HepG2 (cell line): ENCODE measurements at regions of chr2 and their contacts with region 1.

Region 1: GRCh38 chr2:237315170-237315828 is 98.7 kb downstream of the COL6A3 start:
- DNase-seq: peak; percentile 71
- ATAC-seq: peak; percentile 93
- H3K4me3 ChIP-seq: 0 out of 6 replicates have a peak overlapping the region, but pooled peaks of 1 of the 3 experiments have one; percentile 1
- H3K27ac ChIP-seq: no peak overlapping the region
- H3K4me1 ChIP-seq: peaks cover 21% of the 10 kb centered on the region
- H3K27me3 ChIP-seq: peaks cover 1 to 59% of the 10 kb centered on the region in 2 experiments; a peak in 4 of 5 replicates
- CTCF ChIP-seq: no peak
- EP300 ChIP-seq: 0 out of 4 replicates have a peak, but pooled peaks of 1 of the 2 experiments have one; percentile 11
- POLR2A ChIP-seq: no peak
- RAD21 ChIP-seq: no peak

Region 2: DNA sequence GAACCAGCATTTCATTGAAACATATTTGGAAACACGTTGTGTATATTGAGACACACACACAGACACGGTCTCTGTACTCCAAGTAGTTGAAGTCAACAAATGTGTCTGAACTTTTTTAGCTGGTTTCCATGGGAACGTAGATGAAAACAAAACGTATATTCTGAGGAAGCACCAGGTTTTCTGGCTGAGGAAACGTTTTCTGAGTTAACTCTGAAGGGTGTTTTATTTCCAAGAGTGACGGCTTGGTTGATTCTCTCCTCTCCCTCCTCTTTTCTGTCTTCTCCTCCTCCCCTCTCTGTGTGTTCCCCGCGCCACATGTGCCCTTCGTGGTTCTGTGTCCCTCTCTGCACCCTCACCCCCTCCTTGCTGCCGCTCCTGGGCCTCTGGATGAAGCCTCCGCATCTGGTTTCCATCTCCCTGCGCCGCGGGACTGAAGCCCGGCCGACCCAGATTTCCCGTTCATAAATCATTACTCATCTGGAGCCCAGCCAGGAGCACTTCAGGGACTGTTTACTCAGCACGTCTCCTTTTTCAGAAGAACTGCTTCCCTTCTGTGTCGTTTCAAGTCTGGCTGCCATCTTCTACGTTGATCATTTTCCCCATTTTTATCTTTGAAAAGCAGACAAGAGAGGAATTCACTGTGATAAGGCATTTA is 24.0 kb before region 1 on chr2:
- CTCF ChIA-PET with region 1: no interaction called
- POLR2A ChIA-PET with region 1: no interaction called
- in situ Hi-C with region 1: no loop called
- intact Hi-C with region 1: loop called (anchors 1 kb)
- DNase-seq: peak; percentile 63
- ATAC-seq: peak; percentile 80
- H3K4me3 ChIP-seq: no peak overlapping the region; a peak in 1 of 6 replicates
- H3K27ac ChIP-seq: no peak overlapping the region
- H3K4me1 ChIP-seq: peaks cover 11% of the 10 kb centered on the region
- H3K27me3 ChIP-seq: peaks cover 0 to 23% of the 10 kb centered on the region in 2 experiments; a peak in 4 of 5 replicates
- CTCF ChIP-seq: no peak
- EP300 ChIP-seq: no peak
- POLR2A ChIP-seq: no peak
- RAD21 ChIP-seq: no peak

Region 3: GRCh38 chr2:237383991-237384671 is 68.8 kb after region 1 on chr2:
- CTCF ChIA-PET with region 1: no interaction called
- POLR2A ChIA-PET with region 1: no interaction called
- in situ Hi-C with region 1: no loop called
- intact Hi-C with region 1: no loop called
- DNase-seq: no peak
- ATAC-seq: no peak
- H3K4me3 ChIP-seq: no peak overlapping the region
- H3K27ac ChIP-seq: no peak overlapping the region
- H3K4me1 ChIP-seq: no peaks in the 10 kb centered on the region
- H3K27me3 ChIP-seq: peaks cover 0 to 42% of the 10 kb centered on the region in 2 experiments; a peak in 4 of 5 replicates
- CTCF ChIP-seq: no peak
- EP300 ChIP-seq: no peak
- POLR2A ChIP-seq: no peak
- RAD21 ChIP-seq: no peak

Region 4: GRCh38 chr2:237434866-237435311 is 119.6 kb after region 1 on chr2:
- CTCF ChIA-PET with region 1: no interaction called
- POLR2A ChIA-PET with region 1: no interaction called
- in situ Hi-C with region 1: no loop called
- intact Hi-C with region 1: no loop called
- DNase-seq: no peak
- ATAC-seq: no peak
- H3K4me3 ChIP-seq: no peak overlapping the region
- H3K27ac ChIP-seq: no peak overlapping the region
- H3K4me1 ChIP-seq: no peaks in the 10 kb centered on the region
- H3K27me3 ChIP-seq: peaks cover 4 to 46% of the 10 kb centered on the region in 2 experiments
- CTCF ChIP-seq: no peak
- EP300 ChIP-seq: no peak
- POLR2A ChIP-seq: no peak
- RAD21 ChIP-seq: no peak